CD4-positive, alpha-beta memory T cell (primary cell): ENCODE measurements at regions of chrX and their contacts with region 1.

Region 1: DNA sequence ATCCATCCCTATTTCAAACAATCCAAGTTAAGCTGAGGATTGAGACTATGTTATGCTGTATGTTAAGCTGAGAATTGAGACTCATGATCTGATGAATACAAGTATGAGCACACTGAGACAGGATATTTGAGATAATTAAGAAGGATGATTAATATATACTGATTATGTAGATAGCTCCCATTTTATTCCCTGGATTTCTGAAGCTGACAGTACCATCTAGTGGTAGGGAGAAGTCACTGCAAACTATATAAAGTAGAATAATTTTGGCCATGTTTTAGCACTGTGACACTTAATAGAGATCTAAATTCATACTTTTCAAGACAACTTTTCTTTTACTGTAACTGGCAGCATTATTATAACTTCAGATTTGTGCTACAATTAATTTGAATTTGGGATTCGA is 63.8 kb upstream of the HPRT1 start:
- DNase-seq: peak in 2 of 5 donors; percentile 7 to 13
- H3K4me3 ChIP-seq: no peak overlapping the region
- H3K4me3 Mint-ChIP-seq: no peak overlapping the region
- H3K27ac ChIP-seq: no peak overlapping the region
- H3K27ac Mint-ChIP-seq: no peak overlapping the region
- H3K4me1 ChIP-seq: no peaks in the 10 kb centered on the region
- H3K4me1 Mint-ChIP-seq: peaks cover 0 to 6% (median 3%) of the 10 kb centered on the region in 4 donors
- H3K27me3 ChIP-seq: no peaks in the 10 kb centered on the region
- H3K27me3 Mint-ChIP-seq: no peaks in the 10 kb centered on the region

Region 2: GRCh38 chrX:134377537-134377936 is 18.6 kb before region 1 on chrX:
- CTCF ChIA-PET with region 1: interaction called, 11 read pairs
- POLR2A ChIA-PET with region 1: interaction called, 3 read pairs
- intact Hi-C with region 1: loop called (anchors 1 kb)
- DNase-seq: peak in 1 of 5 donors; percentile 13
- H3K4me3 ChIP-seq: no peak overlapping the region
- H3K4me3 Mint-ChIP-seq: no peak overlapping the region
- H3K27ac ChIP-seq: no peak overlapping the region
- H3K27ac Mint-ChIP-seq: no peak overlapping the region
- H3K4me1 ChIP-seq: peaks cover 23% of the 10 kb centered on the region
- H3K4me1 Mint-ChIP-seq: peaks cover 6 to 38% (median 8%) of the 10 kb centered on the region in 4 donors
- H3K27me3 ChIP-seq: no peaks in the 10 kb centered on the region
- H3K27me3 Mint-ChIP-seq: no peaks in the 10 kb centered on the region